Activated CD4-positive, alpha-beta T cell treated with anti-CD3 and anti-CD28 coated beads for 36 hours (primary cell): ENCODE measurements at regions of chr16 and their contacts with region 1.

Region 1: DNA sequence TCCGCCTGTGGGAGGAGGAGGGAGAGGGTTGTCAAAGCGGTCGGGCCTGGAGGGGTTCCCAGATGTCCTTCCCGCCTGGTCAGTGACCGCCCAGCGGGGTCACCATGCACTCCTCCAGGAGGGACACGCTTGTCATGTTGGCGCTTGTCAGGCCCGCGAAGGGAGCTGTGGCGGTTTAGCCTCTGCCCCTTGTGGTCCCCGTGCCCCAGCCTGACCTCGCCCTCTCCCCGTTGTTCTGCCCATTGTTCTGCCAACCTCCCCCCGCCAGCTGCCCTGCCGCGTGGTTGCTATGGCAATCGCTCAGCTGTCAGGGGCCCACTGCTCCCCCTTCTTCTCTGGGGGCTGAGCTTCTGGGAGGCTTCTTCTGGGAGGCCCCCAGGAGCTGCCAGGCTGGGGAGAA is 146.4 kb upstream of the CIBAR2 start:
- DNase-seq: no peak
- ATAC-seq: no peak
- H3K4me3 Mint-ChIP-seq: no peak overlapping the region
- H3K27ac Mint-ChIP-seq: no peak overlapping the region
- H3K4me1 Mint-ChIP-seq: peaks cover 2% of the 10 kb centered on the region
- H3K27me3 Mint-ChIP-seq: no peaks in the 10 kb centered on the region

Region 2: DNA sequence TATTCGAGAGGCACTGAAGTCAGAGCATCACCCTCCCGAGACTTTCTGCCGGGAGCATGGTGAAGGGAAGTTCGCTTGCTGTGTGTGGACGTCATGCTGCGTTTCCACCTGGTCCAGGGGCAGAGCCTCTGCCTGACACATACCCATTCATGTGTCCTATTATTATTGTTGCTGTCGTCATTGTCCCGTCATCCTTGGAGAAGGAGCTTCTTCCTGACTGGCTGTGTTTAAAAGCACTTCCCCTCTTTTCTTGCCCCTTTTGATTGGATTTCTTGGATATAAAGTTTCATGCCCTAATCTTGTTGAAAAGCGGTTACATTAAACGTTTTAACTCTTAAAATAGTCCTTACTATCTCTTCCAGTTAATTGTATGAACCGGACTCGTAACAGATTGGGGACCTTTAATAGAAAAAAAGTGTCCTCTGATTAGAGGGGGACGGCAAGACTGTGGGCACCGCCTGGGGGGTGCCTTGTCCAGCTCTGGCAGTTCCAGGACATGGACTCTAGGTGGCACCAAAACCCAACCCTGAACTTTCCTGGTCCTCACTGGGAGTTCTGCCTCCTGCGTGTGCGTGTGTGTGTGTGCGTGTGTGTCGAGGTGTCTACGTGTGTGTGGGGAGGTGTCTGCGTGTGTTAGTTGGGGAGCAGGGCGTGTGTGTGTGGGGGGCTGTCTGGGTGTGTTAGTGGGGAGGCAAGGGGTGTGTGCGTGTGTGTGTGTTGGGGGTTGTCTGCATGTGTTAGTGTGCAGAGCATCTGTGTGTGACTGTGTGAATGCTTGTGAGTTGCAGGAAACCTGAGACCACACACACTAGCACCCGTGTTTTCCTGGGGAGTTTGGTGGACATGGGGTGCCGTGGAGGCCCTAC is 13.1 kb before region 1 on chr16:
- CTCF ChIA-PET with region 1: interaction called, 12 read pairs
- POLR2A ChIA-PET with region 1: no interaction called
- intact Hi-C with region 1: no loop called
- DNase-seq: peak; percentile 70
- ATAC-seq: peak; percentile 80
- H3K4me3 Mint-ChIP-seq: no peak overlapping the region
- H3K27ac Mint-ChIP-seq: no peak overlapping the region
- H3K4me1 Mint-ChIP-seq: peaks cover 4% of the 10 kb centered on the region
- H3K27me3 Mint-ChIP-seq: peaks cover 2% of the 10 kb centered on the region

Region 3: DNA sequence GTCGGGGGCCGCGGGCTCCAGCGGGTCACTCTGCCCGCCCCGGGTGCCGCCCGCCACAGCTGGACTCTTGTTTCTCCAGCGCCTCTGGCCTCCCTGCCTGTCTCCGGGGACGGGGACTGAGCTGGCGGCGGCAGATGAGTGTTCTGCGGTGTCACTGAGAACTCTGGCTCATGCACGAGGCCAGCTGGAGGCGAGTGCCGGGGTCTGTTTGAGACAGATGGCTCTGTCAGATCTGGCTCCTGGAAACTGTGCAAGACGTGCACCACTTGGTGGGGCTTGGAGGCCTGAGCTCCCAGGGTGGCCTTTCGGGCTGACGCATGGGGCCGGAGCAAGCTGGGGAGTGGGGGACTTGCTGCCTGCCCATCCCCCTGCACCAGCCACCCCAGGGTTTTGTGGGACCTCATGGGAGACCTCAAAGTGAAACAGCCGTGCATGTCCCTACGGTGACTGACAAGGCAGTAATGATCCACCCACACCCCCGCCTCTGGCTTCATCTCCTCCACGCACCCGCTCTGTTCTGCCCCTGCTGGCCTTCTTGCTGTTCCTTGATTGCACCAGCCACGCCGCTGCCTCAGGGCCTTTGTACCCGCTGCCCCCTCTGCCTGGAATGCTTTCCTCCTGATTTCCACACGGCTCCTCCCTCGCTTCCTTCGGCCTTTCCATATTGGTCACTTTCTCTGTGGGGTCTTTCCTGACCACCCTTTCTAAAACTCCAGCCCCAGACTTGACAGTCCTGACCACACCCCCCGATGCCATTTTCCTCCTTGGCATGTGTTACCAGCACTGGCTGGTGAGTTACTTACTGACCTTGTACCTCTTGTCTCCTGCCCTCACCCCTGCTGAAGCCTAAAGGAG is 28.6 kb after region 1 on chr16:
- CTCF ChIA-PET with region 1: no interaction called
- POLR2A ChIA-PET with region 1: no interaction called
- intact Hi-C with region 1: no loop called
- DNase-seq: no peak
- ATAC-seq: no peak
- H3K4me3 Mint-ChIP-seq: no peak overlapping the region
- H3K27ac Mint-ChIP-seq: no peak overlapping the region
- H3K4me1 Mint-ChIP-seq: no peaks in the 10 kb centered on the region
- H3K27me3 Mint-ChIP-seq: peaks cover 3% of the 10 kb centered on the region